PC-3 (cell line): ENCODE measurements at regions of chr5 and their contacts with region 1.

Region 1: DNA sequence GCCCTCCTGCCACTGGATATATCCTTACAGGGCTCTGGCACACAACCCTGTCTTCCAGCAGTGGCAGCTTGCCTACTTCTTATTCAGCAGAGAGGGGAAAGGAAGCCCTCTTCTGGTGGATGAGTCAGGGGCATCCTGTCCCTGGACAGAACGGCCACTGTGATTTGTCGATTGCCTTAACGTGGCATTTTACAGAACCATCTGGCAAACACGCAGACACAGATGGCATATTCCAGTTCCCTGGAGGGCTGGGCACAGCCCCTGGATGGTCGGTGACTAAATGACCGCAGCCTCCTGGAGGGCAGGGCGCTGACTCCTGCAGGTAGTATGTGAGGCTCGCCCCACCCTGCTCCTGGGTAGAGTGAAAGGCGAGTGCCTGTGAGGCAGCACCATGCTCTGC is 62.1 kb downstream of the DCP2 start:
- DNase-seq: peak; percentile 94
- ATAC-seq: peak; percentile 85
- H3K4me3 ChIP-seq: no peak overlapping the region
- H3K27ac ChIP-seq: peak overlapping the region; percentile 79
- H3K4me1 ChIP-seq: peaks cover 18% of the 10 kb centered on the region
- H3K27me3 ChIP-seq: no peaks in the 10 kb centered on the region
- CTCF ChIP-seq: peak; percentile 51

Region 2: DNA sequence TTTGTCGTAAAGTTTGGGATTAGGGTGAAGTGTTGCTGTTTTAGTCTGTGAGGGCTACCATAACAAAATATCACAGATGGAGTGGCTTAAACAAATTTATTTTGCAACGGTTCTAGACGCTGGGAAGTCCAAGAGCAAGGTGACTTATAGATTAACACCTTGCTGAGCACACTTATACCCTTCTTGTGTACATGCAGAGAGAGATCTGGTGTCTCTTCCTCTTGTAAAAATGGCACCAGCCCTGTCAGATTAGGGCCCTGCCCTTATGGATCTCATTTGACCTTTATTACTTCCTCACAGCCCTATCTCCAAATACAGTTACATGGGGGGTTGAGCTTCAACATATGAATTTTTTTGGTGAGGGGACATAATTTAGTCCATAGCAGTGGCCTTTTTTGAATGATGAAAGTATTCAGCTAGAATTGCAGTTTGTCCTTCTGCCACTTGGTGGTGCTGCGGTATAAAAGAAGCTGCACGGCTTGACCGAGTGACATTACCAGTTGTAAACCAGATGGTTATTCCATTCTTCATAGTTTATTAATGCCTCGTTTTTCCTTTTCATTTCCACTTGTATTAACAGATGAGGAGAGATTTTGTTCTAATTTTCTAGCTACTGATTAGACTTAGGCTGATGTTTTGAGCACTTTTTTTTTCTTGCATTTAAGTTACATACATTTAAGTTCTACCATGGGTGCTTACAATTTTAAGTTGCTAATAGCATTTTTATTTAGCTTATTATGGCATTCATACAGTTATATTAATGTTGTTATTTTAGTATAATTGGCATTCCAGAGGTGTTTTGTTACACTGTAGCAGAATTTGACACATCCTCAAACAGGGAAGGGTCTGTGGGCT is 42.7 kb before region 1 on chr5:
- CTCF ChIA-PET with region 1: no interaction called
- POLR2A ChIA-PET with region 1: no interaction called
- intact Hi-C with region 1: loop called (anchors 1 kb)
- DNase-seq: peak; percentile 90
- ATAC-seq: peak; percentile 78
- H3K4me3 ChIP-seq: no peak overlapping the region
- H3K27ac ChIP-seq: no peak overlapping the region
- H3K4me1 ChIP-seq: peaks cover 11% of the 10 kb centered on the region
- H3K27me3 ChIP-seq: no peaks in the 10 kb centered on the region
- CTCF ChIP-seq: peak; percentile 97